HepG2 (cell line): ENCODE measurements at regions of chr14 and their contacts with region 1.

Region 1: GRCh38 chr14:69129264-69129880 is 23.5 kb downstream of the DCAF5 start:
- DNase-seq: peak; percentile 72
- ATAC-seq: peak; percentile 94
- H3K4me3 ChIP-seq: no peak overlapping the region
- H3K27ac ChIP-seq: no peak overlapping the region
- H3K4me1 ChIP-seq: peaks cover 5% of the 10 kb centered on the region
- H3K27me3 ChIP-seq: no peaks in the 10 kb centered on the region
- CTCF ChIP-seq: peak; percentile 91
- EP300 ChIP-seq: no peak
- POLR2A ChIP-seq: no peak
- RAD21 ChIP-seq: peak; percentile 78

Region 2: DNA sequence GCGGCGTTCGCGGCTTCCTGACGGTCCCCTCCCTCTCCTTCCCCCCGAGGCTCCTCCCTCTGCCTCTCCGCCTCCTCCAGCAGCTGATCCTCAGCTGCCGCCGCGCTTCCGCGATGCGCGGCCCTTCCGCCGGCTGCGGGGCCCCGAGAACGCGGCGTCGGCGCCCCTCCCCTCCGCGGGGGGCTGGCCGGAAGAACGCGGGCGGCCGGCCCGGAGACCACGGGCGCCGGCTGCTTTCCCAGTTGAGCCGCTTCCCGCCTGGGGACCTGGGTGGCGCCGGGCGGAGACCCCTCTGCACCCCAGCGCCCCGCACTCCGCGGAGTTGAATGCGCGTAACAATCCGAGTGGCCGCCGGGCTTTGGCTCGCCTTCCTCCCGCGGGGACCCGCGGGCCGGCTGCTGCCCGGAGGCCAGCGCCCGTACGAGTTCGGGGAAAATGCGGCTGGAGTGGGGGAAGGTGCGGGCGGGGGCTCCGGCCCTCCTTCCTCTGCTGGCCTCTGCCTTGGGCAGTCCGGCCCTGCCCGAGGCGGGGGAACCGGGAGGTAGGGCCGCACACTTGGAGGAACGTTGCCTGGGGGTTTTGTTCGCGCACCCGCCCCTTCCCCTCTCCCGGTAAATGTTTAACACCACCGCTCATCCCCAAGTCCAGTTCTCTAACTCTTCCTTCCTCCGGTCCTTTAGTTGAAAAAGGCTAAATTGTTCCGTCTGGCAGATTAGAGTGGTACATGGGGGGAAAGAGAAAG is 23.9 kb after region 1 on chr14:
- CTCF ChIA-PET with region 1: interaction called, 6 read pairs
- POLR2A ChIA-PET with region 1: no interaction called
- in situ Hi-C with region 1: no loop called
- intact Hi-C with region 1: loop called (anchors 1 kb)
- DNase-seq: peak; percentile 85
- ATAC-seq: peak; percentile 84
- H3K4me3 ChIP-seq: peak overlapping the region; percentile 95 to 99 (median 96)
- H3K27ac ChIP-seq: peak overlapping the region; percentile 90
- H3K4me1 ChIP-seq: peaks cover 51% of the 10 kb centered on the region
- H3K27me3 ChIP-seq: no peaks in the 10 kb centered on the region; a peak in 1 of 5 replicates
- CTCF ChIP-seq: peak; percentile 22; the same call in 1 of the 2 replicates
- EP300 ChIP-seq: peak in 1 of 2 experiments; percentile 22; a peak in 1 of 4 replicates
- POLR2A ChIP-seq: peak in 1 of 2 experiments; percentile 80; a peak in 3 of 4 replicates
- RAD21 ChIP-seq: peak; percentile 57

Region 3: DNA sequence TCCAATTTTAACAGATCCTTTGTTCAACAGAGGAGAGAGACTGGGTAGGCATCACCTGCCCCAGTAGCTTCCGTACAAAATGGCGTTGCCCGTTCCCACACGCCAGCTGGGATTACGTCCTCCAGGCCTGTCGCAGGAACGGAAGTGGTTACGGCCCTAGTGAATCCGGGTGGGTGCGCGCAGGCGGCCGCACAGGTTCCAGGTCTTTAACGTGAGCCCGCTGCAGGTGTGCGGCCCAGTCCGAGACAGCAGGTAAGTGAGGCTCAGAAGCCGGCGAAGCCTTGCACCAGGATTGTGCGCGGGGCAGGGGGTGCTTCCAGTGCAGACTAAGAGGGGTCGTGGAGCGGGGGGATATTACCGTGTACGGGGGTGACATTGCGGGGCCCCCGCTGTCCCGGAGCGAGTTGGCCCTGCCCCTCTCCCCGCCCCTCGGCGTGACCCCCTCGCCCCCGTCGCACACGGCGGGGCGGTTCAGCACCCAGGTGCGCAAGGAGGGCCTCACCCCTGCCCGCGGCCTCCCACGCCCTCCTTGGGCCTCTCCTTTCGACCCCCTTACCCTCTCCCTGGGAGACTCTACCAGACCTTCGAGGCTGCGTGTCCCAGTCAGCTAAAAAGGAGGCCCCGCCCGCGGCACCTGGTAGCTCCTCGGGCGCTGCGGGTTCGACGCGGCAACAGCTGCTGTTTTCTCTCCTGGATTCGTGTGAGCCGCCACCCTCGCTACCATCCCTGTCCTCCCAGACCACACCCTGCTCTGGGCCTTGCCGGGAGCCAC is 62.2 kb after region 1 on chr14 and contains the start of gene EXD2:
- CTCF ChIA-PET with region 1: no interaction called
- POLR2A ChIA-PET with region 1: interaction called, 4 read pairs
- in situ Hi-C with region 1: no loop called
- intact Hi-C with region 1: loop called (anchors 10 kb)
- DNase-seq: peak; percentile 87
- ATAC-seq: peak; percentile 99
- H3K4me3 ChIP-seq: peak within 1 kb of the TSS; percentile 75 to 92 (median 81)
- H3K27ac ChIP-seq: peak within 1 kb of the TSS; percentile 66
- H3K4me1 ChIP-seq: peaks cover 21% of the 10 kb centered on the region
- H3K27me3 ChIP-seq: no peaks in the 10 kb centered on the region
- CTCF ChIP-seq: peak; percentile 36
- EP300 ChIP-seq: peak in 1 of 2 experiments; percentile 26; a peak in 2 of 4 replicates
- POLR2A ChIP-seq: peak; percentile 68 to 83
- RAD21 ChIP-seq: peak; percentile 39; the same call in 1 of the 2 replicates
- total RNA-seq, gene EXD2: 8.8 and 15.1 TPM in 2 replicates

Region 4: GRCh38 chr14:69354383-69355153 is 225.2 kb after region 1 on chr14:
- CTCF ChIA-PET with region 1: no interaction called
- POLR2A ChIA-PET with region 1: no interaction called
- in situ Hi-C with region 1: no loop called
- intact Hi-C with region 1: no loop called
- DNase-seq: peak; percentile 16
- ATAC-seq: peak; percentile 68
- H3K4me3 ChIP-seq: peak overlapping the region; percentile 50 to 68 (median 56)
- H3K27ac ChIP-seq: no peak overlapping the region
- H3K4me1 ChIP-seq: peaks cover 30% of the 10 kb centered on the region
- H3K27me3 ChIP-seq: peaks cover 1 to 24% of the 10 kb centered on the region in 2 experiments; a peak in 2 of 5 replicates
- CTCF ChIP-seq: no peak
- EP300 ChIP-seq: no peak
- POLR2A ChIP-seq: no peak
- RAD21 ChIP-seq: no peak